ENCODE measurements at regions of chr3 and their contacts with region 1.

Region 1: DNA sequence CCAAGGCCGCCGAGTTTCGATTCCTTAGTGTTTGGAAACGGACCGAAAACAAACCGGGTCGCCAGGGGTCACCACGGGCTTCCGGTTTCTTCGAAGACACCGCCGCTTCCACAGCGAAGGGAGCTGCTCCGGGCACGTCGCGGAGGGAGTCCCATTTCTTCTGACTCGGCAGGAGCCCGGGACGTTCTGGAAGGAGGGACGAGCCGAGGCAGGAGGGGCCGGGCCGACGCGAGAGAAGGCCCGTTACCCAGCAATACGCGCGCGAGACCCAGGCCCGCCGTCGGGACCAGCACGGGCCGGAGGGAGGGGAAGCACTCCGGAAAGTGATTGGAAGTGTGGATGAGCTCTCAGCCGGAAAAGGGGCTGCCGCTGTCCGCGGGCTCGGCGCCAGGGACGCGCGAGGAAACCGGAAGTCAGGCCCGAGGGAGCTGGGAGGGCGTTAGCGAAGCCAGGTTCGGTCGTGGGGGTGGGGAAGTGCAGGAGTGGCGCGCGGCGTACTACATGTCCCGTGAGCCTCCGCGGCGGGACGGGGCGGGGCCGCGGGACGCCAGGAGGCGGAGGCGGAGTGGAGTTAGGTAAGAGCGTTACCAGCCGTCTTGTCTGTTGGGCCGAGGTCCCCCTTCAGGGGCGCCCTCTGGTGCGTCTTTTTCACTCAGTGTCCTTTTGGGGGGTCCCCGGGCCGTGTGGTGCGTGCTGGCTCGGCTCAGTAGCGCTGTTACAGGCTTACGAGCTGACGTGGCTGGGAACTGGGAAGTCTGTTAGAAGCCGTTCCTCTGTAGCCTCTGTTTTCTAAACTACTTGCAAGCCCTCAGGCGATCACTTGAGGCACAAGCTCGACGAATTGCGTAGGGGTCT is at the starts of genes AZI2 and ZCWPW2:
- DNase-seq: peak; percentile 95
- ATAC-seq: peak; percentile 84
- H3K4me3 Mint-ChIP-seq: peak within 1 kb of the TSS; percentile 98
- H3K27ac Mint-ChIP-seq: peak within 1 kb of the TSS; percentile 99
- H3K4me1 Mint-ChIP-seq: peaks cover 36% of the 10 kb centered on the region
- H3K27me3 Mint-ChIP-seq: no peaks in the 10 kb centered on the region
- total RNA-seq, gene AZI2: 55.1 to 59.8 TPM
- total RNA-seq, gene ZCWPW2: 0.25 to 0.79 TPM

Region 2: DNA sequence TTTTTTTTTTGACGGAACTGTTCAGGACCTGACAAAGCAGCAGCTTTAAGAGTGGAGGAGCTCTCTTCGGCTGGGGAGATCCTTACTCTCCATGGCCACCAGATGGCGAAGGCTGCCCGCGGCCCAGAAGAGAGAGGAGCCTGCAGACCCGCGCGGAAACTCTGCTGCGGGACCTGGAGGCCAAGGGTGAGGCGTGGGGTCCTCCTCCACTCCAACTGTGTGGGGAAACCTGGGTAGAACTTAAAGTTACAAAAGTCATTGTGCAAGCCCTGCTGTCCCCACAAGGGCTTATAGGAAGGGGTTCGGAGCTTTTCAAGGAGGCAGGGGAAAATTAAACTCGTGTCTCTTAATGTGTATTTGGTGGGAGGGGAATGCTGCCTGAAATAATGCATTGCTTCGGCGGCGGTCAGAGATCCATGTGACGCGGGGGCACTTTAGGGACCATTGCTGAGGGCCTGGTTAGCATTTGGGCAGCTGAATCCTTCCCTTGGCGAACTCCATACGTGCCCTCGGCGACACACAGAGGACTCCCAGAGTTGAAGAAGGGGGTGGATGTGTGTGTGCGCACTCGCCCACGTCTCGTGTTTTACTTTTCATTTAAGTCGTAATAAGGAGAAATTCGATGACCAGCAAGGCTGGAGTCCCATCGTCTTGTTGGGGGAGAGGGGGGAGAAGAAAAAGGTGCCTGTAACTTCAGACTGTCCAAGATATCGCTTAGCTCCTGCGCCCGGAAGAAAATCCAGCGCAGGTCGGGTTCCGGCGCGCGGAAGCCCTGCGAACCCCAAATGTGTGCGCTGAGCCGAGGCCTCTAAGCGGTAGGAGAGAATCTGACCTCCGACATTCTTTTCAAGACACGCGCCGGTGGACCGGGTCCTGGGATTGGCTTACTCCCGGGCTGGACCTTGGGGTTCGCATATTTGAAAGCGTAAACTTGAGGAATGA is 636.4 kb before region 1 on chr3:
- POLR2A ChIA-PET with region 1: interaction called, 16 read pairs
- DNase-seq: peak; percentile 80
- ATAC-seq: peak; percentile 95
- H3K4me3 Mint-ChIP-seq: peak overlapping the region; percentile 91
- H3K27ac Mint-ChIP-seq: peak overlapping the region; percentile 79
- H3K4me1 Mint-ChIP-seq: peaks cover 25% of the 10 kb centered on the region
- H3K27me3 Mint-ChIP-seq: peaks cover 53% of the 10 kb centered on the region

Region 3: GRCh38 chr3:28328188-28329151 is 20.4 kb before region 1 on chr3:
- POLR2A ChIA-PET with region 1: interaction called, 18 read pairs
- DNase-seq: no peak
- ATAC-seq: no peak
- H3K4me3 Mint-ChIP-seq: no peak overlapping the region
- H3K27ac Mint-ChIP-seq: no peak overlapping the region
- H3K4me1 Mint-ChIP-seq: peaks cover 19% of the 10 kb centered on the region
- H3K27me3 Mint-ChIP-seq: no peaks in the 10 kb centered on the region

Region 4: GRCh38 chr3:28335246-28335645 is 13.6 kb before region 1 on chr3:
- POLR2A ChIA-PET with region 1: interaction called, 20 read pairs
- DNase-seq: no peak
- ATAC-seq: peak; percentile 36
- H3K4me3 Mint-ChIP-seq: no peak overlapping the region
- H3K27ac Mint-ChIP-seq: no peak overlapping the region
- H3K4me1 Mint-ChIP-seq: peaks cover 15% of the 10 kb centered on the region
- H3K27me3 Mint-ChIP-seq: no peaks in the 10 kb centered on the region

Measured in activated naive CD8-positive, alpha-beta T cell treated with anti-CD3 and anti-CD28 coated beads, Interleukin-2, amount 10 ng/mL, durations not matched to agents 7 days and 5 days (primary cell).